Right ventricle myocardium superior (tissue), 1 donor: ENCODE measurements at regions of chr13 and their contacts with region 1.

Region 1: DNA sequence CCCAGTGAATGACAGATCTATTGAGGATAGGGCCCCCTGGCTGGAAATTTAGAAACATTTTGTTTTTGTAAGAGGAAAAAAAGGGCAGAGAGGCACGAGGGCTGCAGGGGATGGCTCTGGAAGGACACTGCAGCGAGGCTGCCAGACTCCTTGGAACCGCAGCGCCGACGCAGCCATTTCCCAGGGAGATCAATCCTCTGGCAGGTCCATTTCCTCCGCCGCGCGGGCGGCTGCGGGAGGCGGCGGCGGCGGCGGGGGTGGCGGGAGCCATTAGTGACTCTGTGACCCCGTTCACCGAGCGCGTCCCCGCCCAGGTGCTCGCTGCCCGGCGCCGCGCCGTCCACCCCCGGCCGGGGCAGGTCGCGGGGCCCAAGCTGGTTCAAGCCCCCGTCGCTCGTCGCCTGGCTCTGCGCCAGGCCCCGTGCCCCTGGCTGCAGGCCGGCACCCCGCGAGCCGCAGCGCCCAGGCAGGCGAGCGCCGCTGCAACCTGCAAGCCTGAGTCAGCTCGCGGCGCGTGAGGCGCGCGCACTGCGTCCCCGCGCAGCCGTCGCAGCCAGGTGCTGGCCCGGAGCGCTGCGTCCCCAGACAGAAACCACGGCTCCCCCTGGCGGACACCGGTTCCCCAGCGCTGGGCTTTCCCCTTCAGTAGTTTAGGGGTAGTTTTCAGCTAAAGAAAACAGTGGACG is 192.6 kb downstream of the KATNAL1 start:
- DNase-seq: peak; percentile 94
- ATAC-seq: peak; percentile 88

Region 2: DNA sequence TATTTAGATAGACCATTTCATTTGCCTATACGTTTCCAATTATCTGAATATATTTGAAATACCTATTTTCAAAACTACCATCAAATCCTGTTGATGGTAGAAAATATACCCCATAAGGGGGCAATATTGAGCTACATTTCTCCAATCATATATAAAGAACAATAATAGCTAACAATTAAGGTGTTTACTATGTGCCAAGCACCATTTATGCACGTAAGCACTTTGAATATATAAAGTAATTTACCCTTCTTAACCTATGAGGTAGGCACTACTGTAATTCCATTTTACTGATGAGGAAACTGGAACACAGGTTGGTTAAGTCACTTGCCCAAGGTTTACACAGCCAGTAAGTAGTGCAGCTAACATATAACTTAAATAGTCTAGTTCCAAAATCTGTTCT is 343.5 kb before region 1 on chr13:
- intact Hi-C with region 1: loop called (anchors 5 kb)
- DNase-seq: no peak
- ATAC-seq: peak; percentile 34

Region 3: DNA sequence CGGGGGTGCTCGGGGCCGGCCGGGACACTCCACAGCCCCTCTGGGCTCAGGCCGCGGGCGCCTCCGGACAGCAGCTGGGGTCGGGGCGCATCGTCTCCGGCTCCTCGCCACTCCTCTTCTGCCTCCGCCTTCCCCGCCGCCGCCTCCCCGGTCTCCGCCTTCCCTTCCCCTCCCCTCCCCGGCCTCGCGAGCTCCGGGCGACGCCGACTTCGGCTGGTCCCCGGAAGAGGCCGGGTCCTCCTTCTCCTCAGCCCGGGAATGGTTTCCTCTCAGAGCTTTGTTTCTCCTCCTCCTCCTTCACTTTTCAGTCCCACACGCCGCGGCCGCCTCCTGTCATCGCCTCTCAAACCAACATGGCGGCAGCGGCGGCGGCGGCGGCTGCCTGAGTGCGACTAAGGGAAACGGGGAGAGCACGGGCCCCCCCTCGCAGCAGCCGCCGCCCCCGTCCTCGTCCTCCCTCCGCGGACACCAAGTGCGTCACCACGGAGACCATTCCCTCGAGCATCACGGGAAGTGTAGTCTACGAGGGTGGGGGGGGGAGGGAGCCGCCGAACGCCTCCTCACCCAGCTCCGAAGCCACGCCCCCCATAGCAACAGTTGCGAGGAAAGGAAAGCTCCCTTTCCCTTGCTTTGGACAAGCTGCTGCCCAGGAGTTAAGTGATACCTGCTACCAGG is 264.4 kb before region 1 on chr13 and contains the start of gene UBL3:
- intact Hi-C with region 1: loop called (anchors 5 kb)
- DNase-seq: peak; percentile 97
- ATAC-seq: peak; percentile 95
- total RNA-seq, gene UBL3: 21.1 TPM

Region 4: DNA sequence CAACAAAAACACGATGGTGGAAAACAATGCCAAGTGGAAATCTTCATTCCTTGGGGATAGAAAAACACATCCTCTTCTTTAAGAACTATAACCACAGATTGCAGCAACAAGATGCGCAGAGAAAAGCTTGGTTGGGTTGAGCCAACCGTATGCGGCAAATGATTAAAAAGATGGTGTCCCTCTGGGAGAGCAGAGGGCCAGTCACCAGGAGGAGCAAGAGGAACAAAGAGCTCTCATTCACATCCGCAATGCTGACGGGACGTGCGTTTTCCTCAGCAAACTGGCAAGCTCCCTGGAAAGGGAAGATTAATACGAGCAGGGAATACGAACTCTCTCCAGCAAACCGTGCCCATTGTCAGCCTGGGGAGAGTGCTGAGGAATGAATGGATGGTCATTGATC is 51.1 kb after region 1 on chr13:
- intact Hi-C with region 1: no loop called
- DNase-seq: no peak
- ATAC-seq: no peak